Posterior vena cava (tissue), 2 donors: ENCODE measurements at regions of chr11 and their contacts with region 1.

Region 1: GRCh38 chr11:96102664-96103078 is 178.8 kb upstream of the MTMR2 start:
- DNase-seq: no peak

Region 2: GRCh38 chr11:96134602-96135001 is 31.9 kb after region 1 on chr11:
- intact Hi-C with region 1: loop called in 1 of 2 experiments (anchors 2 kb)
- DNase-seq: no peak

Region 3: GRCh38 chr11:96188243-96189006 is 85.8 kb after region 1 on chr11:
- intact Hi-C with region 1: no loop called
- DNase-seq: no peak

Region 4: DNA sequence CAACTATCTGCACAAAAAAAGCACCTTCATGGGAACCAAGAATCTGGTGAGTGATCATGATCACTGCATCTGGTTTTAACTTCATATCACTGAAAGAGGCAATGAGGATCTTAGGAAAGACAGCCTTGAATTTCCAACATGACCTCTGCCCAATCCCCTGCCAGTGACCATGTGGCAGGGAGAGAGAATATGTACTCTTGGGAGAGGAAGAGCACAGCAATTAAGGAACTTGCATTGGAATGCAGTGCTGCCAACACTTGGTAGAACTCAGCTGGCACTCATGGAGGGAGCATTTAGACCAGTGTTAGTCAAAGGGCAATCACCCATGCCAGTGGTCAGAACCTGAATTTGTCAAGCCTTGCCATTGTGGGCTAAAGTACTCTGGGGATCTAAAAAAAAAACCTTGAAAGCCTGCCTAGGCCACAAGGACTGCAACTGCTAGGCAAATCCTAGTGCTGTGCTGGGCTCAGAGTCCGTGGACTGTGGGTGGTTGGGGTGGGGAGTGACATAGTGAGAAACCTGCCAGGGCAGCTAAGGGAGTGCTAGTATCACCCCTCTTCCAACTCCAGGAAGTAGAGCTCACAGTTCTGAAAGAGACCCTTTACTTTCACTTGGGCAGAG is 310.2 kb after region 1 on chr11:
- intact Hi-C with region 1: no loop called
- DNase-seq: no peak